ENCODE measurements at regions of chr15 and their contacts with region 1.

Region 1: DNA sequence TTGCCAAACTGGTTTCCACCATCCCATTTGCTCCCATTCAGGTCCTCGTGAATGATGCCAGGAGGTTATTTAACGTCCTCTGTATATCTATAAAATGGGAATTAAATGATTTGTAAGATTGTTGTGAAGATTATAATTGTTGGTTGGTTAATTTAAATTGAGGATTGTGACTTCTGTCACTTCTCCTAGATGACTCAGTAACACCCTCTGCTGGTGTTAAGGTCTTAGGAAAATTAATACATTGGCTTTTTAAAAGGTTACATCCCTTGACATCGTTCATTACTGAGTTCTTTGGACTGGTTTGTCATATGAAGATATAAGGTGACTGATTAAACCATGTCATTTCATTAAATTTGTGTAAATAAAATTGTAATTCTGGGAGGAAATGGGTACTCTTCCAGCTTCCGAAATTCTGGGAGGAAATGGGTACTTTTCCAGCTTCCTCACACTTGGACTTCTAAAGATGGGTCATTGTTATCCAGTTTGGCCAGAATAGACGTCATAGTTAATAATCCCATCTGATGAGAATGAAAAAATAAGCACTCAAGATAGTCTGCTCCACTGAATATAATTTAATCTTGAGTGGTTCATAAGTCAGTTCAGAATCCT is 33.3 kb upstream of the PAQR5 start:
- DNase-seq: no peak
- H3K4me3 Mint-ChIP-seq: no peak overlapping the region
- H3K27ac Mint-ChIP-seq: no peak overlapping the region
- H3K4me1 Mint-ChIP-seq: no peaks in the 10 kb centered on the region
- H3K27me3 Mint-ChIP-seq: no peaks in the 10 kb centered on the region

Region 2: GRCh38 chr15:69394556-69395282 is 129.3 kb after region 1 on chr15:
- CTCF ChIA-PET with region 1: no interaction called
- intact Hi-C with region 1: loop called (anchors 2 kb)
- DNase-seq: peak; percentile 88
- H3K4me3 Mint-ChIP-seq: no peak overlapping the region
- H3K27ac Mint-ChIP-seq: no peak overlapping the region
- H3K4me1 Mint-ChIP-seq: peaks cover 4% of the 10 kb centered on the region
- H3K27me3 Mint-ChIP-seq: peaks cover 3% of the 10 kb centered on the region